A673 (cell line): ENCODE measurements at regions of chr1 and their contacts with region 1.

Region 1: DNA sequence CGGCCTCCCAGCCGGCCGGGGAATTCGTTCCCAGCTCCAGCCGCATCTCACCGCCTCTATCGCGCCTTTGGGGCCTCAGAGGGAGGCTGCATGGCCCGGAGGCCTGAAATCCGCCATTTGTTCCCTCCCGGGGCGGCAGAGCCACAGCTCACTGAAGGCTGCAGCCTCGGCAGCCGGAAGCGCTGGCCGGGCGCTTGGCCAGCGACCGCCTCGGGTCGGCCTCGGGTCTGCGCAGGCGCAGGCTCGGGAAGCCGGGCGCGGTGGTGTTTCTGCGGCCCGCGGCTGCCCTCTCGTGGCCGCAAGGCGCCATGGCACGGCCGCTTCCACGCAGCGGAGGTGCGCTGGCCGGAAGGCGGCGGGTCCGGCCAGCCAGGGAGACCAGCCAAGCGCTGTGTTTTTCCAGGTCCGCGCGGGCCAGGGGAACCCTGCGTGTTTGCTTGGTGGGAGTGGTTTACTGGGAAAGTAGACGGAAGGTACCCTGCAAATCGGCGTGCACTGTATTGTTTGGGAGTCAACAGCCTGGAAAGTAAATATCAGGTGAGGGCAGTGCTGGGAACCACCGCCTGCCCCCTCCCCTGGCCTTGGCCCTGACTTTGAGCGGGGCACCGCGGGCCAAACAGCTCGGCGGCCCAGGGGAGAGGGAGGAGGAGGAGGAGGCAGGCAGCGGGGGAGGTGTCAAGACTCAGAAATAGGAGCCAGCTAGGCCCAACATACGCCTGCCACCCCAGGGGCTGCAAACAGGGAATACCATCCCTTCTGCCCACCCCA is 52.7 kb upstream of the CD34 start:
- DNase-seq: peak; percentile 88
- H3K4me3 ChIP-seq: peak overlapping the region; percentile 46
- H3K27ac ChIP-seq: peak overlapping the region; percentile 67
- H3K4me1 ChIP-seq: peaks cover 5% of the 10 kb centered on the region
- H3K27me3 ChIP-seq: peaks cover 33% of the 10 kb centered on the region
- CTCF ChIP-seq: peak; percentile 84

Region 2: GRCh38 chr1:207885129-207886032 is 78.2 kb before region 1 on chr1:
- CTCF ChIA-PET with region 1: interaction called, 17 read pairs
- POLR2A ChIA-PET with region 1: no interaction called
- intact Hi-C with region 1: loop called (anchors 1 kb)
- DNase-seq: peak; percentile 77
- H3K4me3 ChIP-seq: no peak overlapping the region
- H3K27ac ChIP-seq: no peak overlapping the region
- H3K4me1 ChIP-seq: no peaks in the 10 kb centered on the region
- H3K27me3 ChIP-seq: no peaks in the 10 kb centered on the region
- CTCF ChIP-seq: peak; percentile 97

Region 3: GRCh38 chr1:207897188-207897587 is 66.4 kb before region 1 on chr1:
- CTCF ChIA-PET with region 1: interaction called, 18 read pairs
- POLR2A ChIA-PET with region 1: no interaction called
- intact Hi-C with region 1: no loop called
- DNase-seq: no peak
- H3K4me3 ChIP-seq: no peak overlapping the region
- H3K27ac ChIP-seq: no peak overlapping the region
- H3K4me1 ChIP-seq: no peaks in the 10 kb centered on the region
- H3K27me3 ChIP-seq: peaks cover 2% of the 10 kb centered on the region
- CTCF ChIP-seq: peak; percentile 31; the same call in 1 of the 2 replicates